ENCODE measurements at regions of chr4 and their contacts with region 1.

Region 1: GRCh38 chr4:102620697-102621497 is 119.7 kb downstream of the NFKB1 start:
- DNase-seq: peak; percentile 43 to 68
- H3K4me3 ChIP-seq: peak overlapping the region; percentile 25; the same call in 1 of the 2 replicates
- H3K27ac ChIP-seq: peak overlapping the region; percentile 12
- H3K4me1 ChIP-seq: peaks cover 12% of the 10 kb centered on the region
- H3K27me3 ChIP-seq: no peaks in the 10 kb centered on the region
- CTCF ChIP-seq: peak; percentile 72

Region 2: DNA sequence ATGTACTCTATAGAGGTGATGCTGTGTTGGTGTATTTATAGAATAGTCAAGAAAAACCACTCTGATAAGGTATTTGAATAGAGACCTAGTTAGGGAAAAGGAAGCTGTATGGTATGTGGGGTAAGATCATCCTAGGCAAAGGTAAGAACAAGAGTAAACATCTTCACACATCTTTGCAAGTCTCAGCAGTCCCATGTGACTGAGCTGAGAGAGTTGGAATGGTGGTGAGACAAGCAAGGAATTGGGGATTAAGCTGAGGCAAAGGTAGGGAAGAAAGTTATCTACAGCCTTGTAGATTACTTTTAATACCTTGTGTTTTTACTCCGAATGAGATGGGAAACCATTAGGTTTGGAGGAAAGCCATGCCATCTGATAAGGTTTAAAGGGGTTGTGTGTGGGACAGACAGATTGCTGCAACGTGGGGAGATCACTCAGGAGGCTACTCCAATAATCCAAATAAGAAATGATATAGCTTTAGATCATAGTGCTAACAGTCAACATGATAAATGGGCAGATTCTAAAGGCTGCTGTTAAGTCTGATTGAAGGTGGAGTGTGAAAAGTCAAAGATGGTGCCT is 171.6 kb after region 1 on chr4:
- CTCF ChIA-PET with region 1: no interaction called
- POLR2A ChIA-PET with region 1: no interaction called
- intact Hi-C with region 1: loop called (anchors 10 kb)
- DNase-seq: no peak
- H3K4me3 ChIP-seq: no peak overlapping the region
- H3K27ac ChIP-seq: no peak overlapping the region
- H3K4me1 ChIP-seq: no peaks in the 10 kb centered on the region
- H3K27me3 ChIP-seq: no peaks in the 10 kb centered on the region
- CTCF ChIP-seq: no peak

Region 3: GRCh38 chr4:102868781-102869568 is 248.1 kb after region 1 on chr4 and contains the start of gene CISD2:
- CTCF ChIA-PET with region 1: no interaction called
- POLR2A ChIA-PET with region 1: no interaction called
- intact Hi-C with region 1: loop called (anchors 2 kb)
- DNase-seq: peak; percentile 80 to 89
- H3K4me3 ChIP-seq: peak within 1 kb of the TSS; percentile 80
- H3K27ac ChIP-seq: peak within 1 kb of the TSS; percentile 94
- H3K4me1 ChIP-seq: peaks cover 34% of the 10 kb centered on the region
- H3K27me3 ChIP-seq: no peaks in the 10 kb centered on the region
- CTCF ChIP-seq: no peak
- total RNA-seq, gene CISD2: 23.1 and 26.9 TPM in 2 replicates

Region 4: DNA sequence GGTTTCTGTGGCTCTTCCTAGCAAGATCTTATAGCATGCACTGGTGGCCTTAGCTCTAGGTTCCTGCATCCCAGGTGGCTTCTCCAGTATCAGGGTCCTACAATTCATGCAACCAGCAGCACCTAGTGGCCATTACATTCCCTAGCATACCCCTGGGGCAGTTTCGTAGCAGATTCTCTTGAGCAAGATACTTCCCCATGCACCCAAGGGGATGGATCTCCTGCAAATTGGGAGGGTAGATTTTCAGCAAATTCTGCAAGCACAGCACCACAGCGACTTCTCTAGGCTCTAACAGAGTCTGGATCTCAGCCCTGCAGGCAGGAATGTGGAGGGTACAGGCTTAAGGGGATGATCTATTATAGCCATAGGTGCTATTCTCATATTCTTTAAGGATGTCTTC is 411.7 kb after region 1 on chr4:
- CTCF ChIA-PET with region 1: interaction called, 4 read pairs
- POLR2A ChIA-PET with region 1: no interaction called
- intact Hi-C with region 1: loop called (anchors 5 kb)
- DNase-seq: peak; percentile 22 to 34
- H3K4me3 ChIP-seq: no peak overlapping the region
- H3K27ac ChIP-seq: no peak overlapping the region
- H3K4me1 ChIP-seq: no peaks in the 10 kb centered on the region
- H3K27me3 ChIP-seq: no peaks in the 10 kb centered on the region
- CTCF ChIP-seq: peak; percentile 48; the same call in 1 of the 2 replicates